H1 (cell line): ENCODE measurements at regions of chr6 and their contacts with region 1.

Region 1: GRCh38 chr6:39003072-39003471 is 45.5 kb upstream of the GLP1R start:
- DNase-seq: no peak
- H3K4me3 ChIP-seq: no peak overlapping the region
- H3K27ac ChIP-seq: no peak overlapping the region
- H3K4me1 ChIP-seq: no peaks in the 10 kb centered on the region
- H3K27me3 ChIP-seq: no peaks in the 10 kb centered on the region; a peak in 1 of 7 replicates
- CTCF ChIP-seq: peak in 2 of 3 experiments; percentile 72 to 80; a peak in 3 of 4 replicates
- EP300 ChIP-seq: no peak
- POLR2A ChIP-seq: no peak
- RAD21 ChIP-seq: peak; percentile 70 to 83

Region 2: GRCh38 chr6:38871741-38872568 is 131.1 kb before region 1 on chr6:
- CTCF ChIA-PET with region 1: interaction called, 36 read pairs
- POLR2A ChIA-PET with region 1: no interaction called
- DNase-seq: peak; percentile 39 to 86
- H3K4me3 ChIP-seq: no peak overlapping the region
- H3K27ac ChIP-seq: no peak overlapping the region
- H3K4me1 ChIP-seq: no peaks in the 10 kb centered on the region; a peak in 1 of 7 replicates
- H3K27me3 ChIP-seq: no peaks in the 10 kb centered on the region
- CTCF ChIP-seq: peak; percentile 73 to 96 (median 91)
- EP300 ChIP-seq: no peak
- POLR2A ChIP-seq: no peak
- RAD21 ChIP-seq: peak; percentile 92 to 96

Region 3: DNA sequence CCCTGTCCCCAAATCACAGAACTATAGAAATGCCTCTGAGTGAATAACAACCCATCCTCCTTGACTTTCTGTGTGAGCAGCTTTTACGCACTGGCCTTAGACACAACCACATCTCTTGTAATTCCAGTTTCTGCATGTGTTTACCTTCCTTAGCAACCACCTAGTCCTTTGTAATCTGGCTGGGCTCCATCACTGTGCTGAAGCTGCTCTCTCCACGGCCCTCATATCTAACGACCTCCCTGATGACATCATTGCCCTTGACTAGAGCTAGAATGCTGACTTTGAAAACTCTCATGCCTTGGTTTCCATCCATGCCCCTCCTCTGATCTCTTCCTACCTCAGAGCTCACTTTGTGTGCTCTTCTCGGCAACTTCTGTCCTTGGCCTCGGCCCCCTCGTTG is 15.0 kb after region 1 on chr6:
- CTCF ChIA-PET with region 1: interaction called, 22 read pairs
- POLR2A ChIA-PET with region 1: no interaction called
- DNase-seq: no peak
- H3K4me3 ChIP-seq: no peak overlapping the region
- H3K27ac ChIP-seq: no peak overlapping the region
- H3K4me1 ChIP-seq: no peaks in the 10 kb centered on the region
- H3K27me3 ChIP-seq: no peaks in the 10 kb centered on the region; a peak in 2 of 7 replicates
- CTCF ChIP-seq: no peak
- EP300 ChIP-seq: no peak
- POLR2A ChIP-seq: no peak
- RAD21 ChIP-seq: no peak

Region 4: GRCh38 chr6:39037707-39038106 is 34.6 kb after region 1 on chr6:
- CTCF ChIA-PET with region 1: interaction called, 12 read pairs
- POLR2A ChIA-PET with region 1: no interaction called
- DNase-seq: no peak
- H3K4me3 ChIP-seq: no peak overlapping the region
- H3K27ac ChIP-seq: no peak overlapping the region
- H3K4me1 ChIP-seq: no peaks in the 10 kb centered on the region
- H3K27me3 ChIP-seq: peaks cover 0 to 5% (median 0%) of the 10 kb centered on the region in 4 experiments; a peak in 3 of 7 replicates
- CTCF ChIP-seq: no peak
- EP300 ChIP-seq: no peak
- POLR2A ChIP-seq: no peak
- RAD21 ChIP-seq: no peak

Region 5: DNA sequence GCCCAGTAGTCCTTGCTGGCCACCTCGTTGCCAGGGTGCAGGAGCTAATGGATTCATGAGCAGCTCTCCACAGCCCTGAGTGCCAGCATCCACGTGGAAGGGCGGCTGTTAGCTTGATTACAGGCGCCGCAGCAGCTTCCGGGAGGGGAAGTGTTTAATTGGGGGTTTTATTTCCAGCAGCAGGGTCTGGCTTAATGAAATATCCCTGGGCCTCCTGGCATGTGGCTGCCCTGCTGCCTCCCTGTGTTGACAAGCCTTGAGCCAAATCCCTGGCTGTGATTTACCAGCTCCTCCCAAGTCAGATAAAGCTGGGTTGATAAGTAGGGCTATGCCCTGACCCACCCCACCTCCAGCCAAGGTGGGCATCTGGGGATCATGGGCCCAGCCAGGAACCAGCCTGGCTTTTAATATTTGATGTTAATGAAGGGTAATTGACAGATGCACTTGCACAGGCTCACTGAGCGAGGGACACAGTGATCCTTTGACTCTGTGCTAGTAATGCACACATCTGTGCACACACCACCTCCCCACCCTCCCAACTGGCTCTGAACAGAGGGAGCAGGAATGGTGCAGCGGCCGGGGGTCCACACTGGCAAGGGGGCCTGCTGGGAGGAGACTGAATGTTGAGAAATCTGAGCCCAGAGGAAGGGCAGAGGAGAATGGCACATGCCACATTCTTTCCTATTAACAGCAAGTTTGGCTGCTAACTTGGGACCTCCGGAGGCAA is 59.1 kb after region 1 on chr6:
- CTCF ChIA-PET with region 1: interaction called, 15 read pairs
- POLR2A ChIA-PET with region 1: no interaction called
- DNase-seq: no peak
- H3K4me3 ChIP-seq: no peak overlapping the region
- H3K27ac ChIP-seq: no peak overlapping the region
- H3K4me1 ChIP-seq: no peaks in the 10 kb centered on the region
- H3K27me3 ChIP-seq: 0 out of 7 replicates have a peak, but pooled peaks cover 0 to under 1% (median 0%) of the 10 kb centered on the region in 4 experiments
- CTCF ChIP-seq: no peak
- EP300 ChIP-seq: no peak
- POLR2A ChIP-seq: no peak
- RAD21 ChIP-seq: no peak

Region 6: GRCh38 chr6:39088331-39088730 is 85.3 kb after region 1 on chr6:
- CTCF ChIA-PET with region 1: interaction called, 153 read pairs
- POLR2A ChIA-PET with region 1: no interaction called
- DNase-seq: peak in 1 of 2 experiments; percentile 50
- H3K4me3 ChIP-seq: peak overlapping the region in 1 of 4 experiments; percentile 5; a peak in 2 of 8 replicates
- H3K27ac ChIP-seq: no peak overlapping the region
- H3K4me1 ChIP-seq: peaks cover 10 to 35% (median 12%) of the 10 kb centered on the region in 4 experiments
- H3K27me3 ChIP-seq: no peaks in the 10 kb centered on the region
- CTCF ChIP-seq: peak; percentile 56 to 73 (median 67)
- EP300 ChIP-seq: no peak; a peak in 1 of 3 replicates
- POLR2A ChIP-seq: no peak
- RAD21 ChIP-seq: peak; percentile 61 to 74

Region 7: DNA sequence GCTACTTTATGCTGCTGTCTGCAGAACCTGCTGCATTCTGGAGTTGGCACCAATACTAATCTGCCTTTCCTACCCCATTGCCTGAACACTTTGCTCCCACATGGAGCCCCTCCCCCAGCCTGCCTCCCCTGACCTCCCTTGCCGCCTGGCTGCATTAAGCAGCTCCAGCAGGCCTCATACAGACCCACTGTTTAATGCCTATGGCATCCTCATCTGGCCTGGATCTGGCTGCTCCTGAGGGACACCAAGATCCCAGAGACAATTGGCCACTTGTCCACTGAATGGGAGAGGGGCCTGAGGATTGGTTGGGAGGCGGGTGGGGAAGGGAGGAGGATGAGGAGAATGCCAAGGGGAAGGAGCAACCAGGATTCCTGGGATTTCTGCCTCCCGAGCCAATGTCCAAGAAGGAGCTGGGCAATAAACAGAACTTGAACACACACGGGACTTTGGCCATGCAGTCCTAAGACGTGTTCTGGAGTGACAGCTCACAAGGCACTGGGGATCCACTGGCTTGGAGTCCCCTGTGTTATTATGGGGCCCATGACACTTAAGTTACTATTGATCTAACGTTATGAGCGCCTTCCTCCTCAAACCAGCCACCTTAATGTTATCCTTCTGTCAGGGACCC is 236.6 kb after region 1 on chr6:
- CTCF ChIA-PET with region 1: no interaction called
- POLR2A ChIA-PET with region 1: no interaction called
- DNase-seq: no peak
- H3K4me3 ChIP-seq: no peak overlapping the region
- H3K27ac ChIP-seq: no peak overlapping the region
- H3K4me1 ChIP-seq: peaks cover 0 to 2% (median 1%) of the 10 kb centered on the region in 4 experiments; a peak in 3 of 7 replicates
- H3K27me3 ChIP-seq: no peaks in the 10 kb centered on the region
- CTCF ChIP-seq: peak in 2 of 3 experiments; percentile 17 to 19; a peak in 2 of 4 replicates
- EP300 ChIP-seq: no peak
- POLR2A ChIP-seq: no peak
- RAD21 ChIP-seq: peak in 1 of 2 experiments; percentile 32; a peak in 3 of 4 replicates

Region 8: DNA sequence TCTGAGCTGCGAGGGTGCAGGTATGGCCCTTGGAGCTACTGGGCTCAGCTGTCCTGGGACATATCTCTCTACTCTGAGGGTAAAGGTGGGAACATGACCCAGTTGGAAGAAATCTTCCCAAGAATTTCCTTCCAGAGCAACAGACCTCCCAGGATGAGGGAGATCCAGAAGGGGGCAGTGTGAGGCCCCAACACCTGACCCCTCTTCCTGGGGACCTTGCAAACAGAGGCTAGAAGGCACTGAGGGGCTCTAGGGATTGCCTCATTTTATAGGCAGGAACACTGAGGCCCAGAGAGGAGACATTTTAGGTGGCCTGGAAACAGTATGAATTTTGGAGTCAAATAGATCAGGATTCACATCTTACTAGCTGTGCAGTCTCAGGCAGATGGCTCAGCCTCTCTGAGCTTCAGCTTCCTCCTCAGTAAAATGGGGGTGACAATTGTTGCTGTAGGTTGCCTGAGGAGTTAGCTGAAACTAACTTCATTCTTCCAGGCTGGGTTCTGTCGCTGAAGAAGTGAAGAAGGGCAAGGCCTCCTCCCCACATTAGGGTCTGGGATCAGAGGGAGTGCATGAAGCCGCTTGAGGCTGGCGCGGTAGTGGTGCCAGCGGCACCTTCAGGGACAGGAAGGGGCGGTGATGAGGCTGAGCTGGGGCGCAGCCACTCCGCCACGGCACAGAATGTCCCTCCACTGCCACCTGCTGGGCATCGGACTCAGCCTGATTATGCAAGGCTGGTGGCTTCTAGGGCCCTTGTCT is 299.8 kb after region 1 on chr6:
- CTCF ChIA-PET with region 1: interaction called, 11 read pairs
- POLR2A ChIA-PET with region 1: no interaction called
- DNase-seq: peak; percentile 73 to 97
- H3K4me3 ChIP-seq: no peak overlapping the region
- H3K27ac ChIP-seq: no peak overlapping the region
- H3K4me1 ChIP-seq: peaks cover 0 to 4% (median under 1%) of the 10 kb centered on the region in 4 experiments; a peak in 2 of 7 replicates
- H3K27me3 ChIP-seq: no peaks in the 10 kb centered on the region; a peak in 1 of 7 replicates
- CTCF ChIP-seq: peak; percentile 95 to 98 (median 97)
- EP300 ChIP-seq: no peak
- POLR2A ChIP-seq: no peak
- RAD21 ChIP-seq: peak; percentile 96 to 98